Activated CD4-positive, alpha-beta T cell treated with anti-CD3 and anti-CD28 coated beads for 36 hours (primary cell): ENCODE measurements at regions of chr19 and their contacts with region 1.

Region 1: GRCh38 chr19:55117636-55118391 is at the start of gene PPP1R12C:
- DNase-seq: peak; percentile 99
- ATAC-seq: peak; percentile 96
- H3K4me3 Mint-ChIP-seq: peak within 1 kb of the TSS; percentile 95
- H3K27ac Mint-ChIP-seq: peak within 1 kb of the TSS; percentile 97
- H3K4me1 Mint-ChIP-seq: peaks cover 24% of the 10 kb centered on the region
- H3K27me3 Mint-ChIP-seq: peaks cover 2% of the 10 kb centered on the region
- total RNA-seq, gene PPP1R12C: 66.1 to 69.8 TPM

Region 2: DNA sequence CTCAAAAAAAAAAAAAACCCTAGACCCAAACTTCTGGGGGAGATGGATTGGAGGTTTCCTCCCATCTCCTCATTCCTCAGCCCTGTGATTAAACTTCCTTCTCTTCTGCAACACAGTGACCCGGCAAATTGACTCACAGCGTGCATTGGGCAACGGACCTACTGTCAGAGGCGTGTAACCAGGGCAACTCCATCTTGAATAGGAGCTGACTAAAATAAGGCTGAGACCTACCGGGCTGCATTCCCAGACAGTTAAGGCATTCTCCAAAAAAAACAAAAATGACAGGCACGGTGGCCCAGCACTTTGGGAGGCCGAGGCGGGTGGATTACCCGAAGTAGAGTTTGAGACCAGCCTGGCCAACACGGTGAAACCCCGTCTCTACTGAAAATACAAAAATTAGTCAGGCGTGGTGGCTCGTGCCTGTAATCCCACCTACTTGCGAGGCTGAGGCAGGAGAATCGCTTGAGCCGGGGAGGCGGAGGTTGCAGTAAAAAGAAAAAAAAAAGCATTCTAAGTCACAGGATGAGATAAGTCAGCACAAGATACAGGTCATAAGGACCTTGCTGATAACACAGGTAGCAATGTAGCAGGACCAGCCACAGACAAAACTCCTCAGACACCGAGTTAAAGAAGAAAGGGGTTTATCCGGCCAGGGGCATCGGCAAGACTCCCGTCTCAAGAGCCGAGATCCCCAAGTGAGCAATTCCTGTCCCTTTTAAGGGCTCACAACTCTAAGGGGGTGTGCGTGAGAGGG is 165.0 kb before region 1 on chr19:
- CTCF ChIA-PET with region 1: no interaction called
- POLR2A ChIA-PET with region 1: no interaction called
- intact Hi-C with region 1: no loop called
- DNase-seq: no peak
- ATAC-seq: no peak
- H3K4me3 Mint-ChIP-seq: no peak overlapping the region
- H3K27ac Mint-ChIP-seq: no peak overlapping the region
- H3K4me1 Mint-ChIP-seq: no peaks in the 10 kb centered on the region
- H3K27me3 Mint-ChIP-seq: peaks cover 2% of the 10 kb centered on the region

Region 3: DNA sequence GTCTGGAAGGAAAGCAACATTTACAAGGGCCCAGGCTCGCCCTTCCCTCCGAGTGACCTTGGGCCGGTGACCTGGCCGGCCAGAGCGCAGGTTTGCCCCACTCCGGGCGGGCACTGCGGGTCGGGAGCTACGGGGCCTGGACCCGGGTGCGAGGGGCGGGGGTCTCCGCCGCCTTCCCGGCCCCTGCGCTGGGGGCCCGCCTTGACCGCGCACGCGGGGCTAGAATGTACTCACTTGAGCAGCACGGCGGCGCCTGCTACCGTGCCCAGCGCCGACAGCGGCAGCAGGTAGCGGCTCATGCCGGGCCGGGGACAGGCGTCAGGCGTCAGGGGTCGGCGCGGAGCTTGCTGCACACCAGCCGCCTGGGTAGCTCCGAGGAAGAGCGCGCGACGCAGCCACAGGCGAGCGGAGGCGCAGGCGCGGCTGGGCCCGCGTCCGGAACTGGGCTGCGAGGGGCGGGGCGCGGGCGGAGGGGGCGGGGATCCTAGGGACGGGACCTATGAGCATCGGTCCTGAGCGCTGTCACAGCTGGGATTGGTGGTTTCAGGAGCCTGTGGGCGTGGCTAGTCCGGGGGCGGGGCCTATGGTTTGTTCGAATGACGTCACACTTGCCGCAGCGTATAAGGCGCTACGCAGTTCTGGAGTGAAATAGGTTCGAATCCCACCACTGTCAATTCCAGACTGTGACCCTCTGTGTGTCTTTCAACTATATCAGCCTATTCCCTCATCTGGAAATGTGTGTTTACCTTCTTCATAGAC is 54.9 kb before region 1 on chr19 and contains the start of gene RDH13:
- CTCF ChIA-PET with region 1: no interaction called
- POLR2A ChIA-PET with region 1: no interaction called
- intact Hi-C with region 1: loop called in 1 of 2 experiments (anchors 1 kb)
- DNase-seq: peak; percentile 100
- ATAC-seq: peak; percentile 100
- H3K4me3 Mint-ChIP-seq: peak within 1 kb of the TSS; percentile 79
- H3K27ac Mint-ChIP-seq: peak within 1 kb of the TSS; percentile 61
- H3K4me1 Mint-ChIP-seq: peaks cover 9% of the 10 kb centered on the region
- H3K27me3 Mint-ChIP-seq: peaks cover 23% of the 10 kb centered on the region
- total RNA-seq, gene RDH13: 11.9 to 12.8 TPM

Region 4: DNA sequence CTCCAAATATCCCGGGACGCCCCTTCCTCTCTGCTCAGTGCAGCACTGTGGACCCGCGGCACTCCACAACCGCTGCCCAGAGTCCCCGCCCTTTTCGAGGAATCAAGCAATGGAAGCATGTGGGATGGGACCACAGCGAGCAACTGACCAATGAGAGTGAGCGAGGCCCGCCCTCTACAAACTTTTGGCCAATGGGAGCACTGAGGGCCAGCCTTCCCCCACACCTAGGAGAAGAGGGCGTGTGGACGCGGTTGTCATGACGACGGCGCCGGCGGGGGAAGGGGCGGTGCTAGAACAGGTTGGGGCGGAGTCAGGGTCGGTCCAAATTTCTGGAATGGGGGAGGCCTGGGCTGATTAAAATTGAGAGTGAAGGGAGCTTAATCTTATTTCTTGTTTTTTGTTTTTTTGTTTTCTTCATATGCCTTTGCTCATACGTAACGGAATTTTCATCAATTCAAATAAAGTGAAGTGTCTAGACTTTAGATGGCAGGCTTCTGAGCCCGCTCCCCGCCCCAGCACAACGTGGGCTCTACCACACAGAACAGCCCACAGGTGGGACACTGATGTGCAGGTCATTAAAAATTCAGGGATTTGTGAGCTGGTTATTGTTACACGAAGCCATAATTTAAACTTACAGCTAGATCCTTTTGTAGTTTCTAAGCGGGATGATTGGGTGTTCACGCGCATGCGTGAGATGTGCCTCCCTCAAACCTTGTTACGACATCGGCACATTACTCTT is 48.9 kb after region 1 on chr19 and contains the start of gene DNAAF3:
- CTCF ChIA-PET with region 1: no interaction called
- POLR2A ChIA-PET with region 1: interaction called, 4 read pairs
- intact Hi-C with region 1: loop called in 1 of 2 experiments (anchors 1 kb)
- DNase-seq: peak; percentile 95
- ATAC-seq: peak; percentile 95
- H3K4me3 Mint-ChIP-seq: peak within 1 kb of the TSS; percentile 71
- H3K27ac Mint-ChIP-seq: peak within 1 kb of the TSS; percentile 11
- H3K4me1 Mint-ChIP-seq: peaks cover 10% of the 10 kb centered on the region
- H3K27me3 Mint-ChIP-seq: peaks cover 45% of the 10 kb centered on the region
- total RNA-seq, gene DNAAF3: 0.53 to 0.72 TPM

Region 5: DNA sequence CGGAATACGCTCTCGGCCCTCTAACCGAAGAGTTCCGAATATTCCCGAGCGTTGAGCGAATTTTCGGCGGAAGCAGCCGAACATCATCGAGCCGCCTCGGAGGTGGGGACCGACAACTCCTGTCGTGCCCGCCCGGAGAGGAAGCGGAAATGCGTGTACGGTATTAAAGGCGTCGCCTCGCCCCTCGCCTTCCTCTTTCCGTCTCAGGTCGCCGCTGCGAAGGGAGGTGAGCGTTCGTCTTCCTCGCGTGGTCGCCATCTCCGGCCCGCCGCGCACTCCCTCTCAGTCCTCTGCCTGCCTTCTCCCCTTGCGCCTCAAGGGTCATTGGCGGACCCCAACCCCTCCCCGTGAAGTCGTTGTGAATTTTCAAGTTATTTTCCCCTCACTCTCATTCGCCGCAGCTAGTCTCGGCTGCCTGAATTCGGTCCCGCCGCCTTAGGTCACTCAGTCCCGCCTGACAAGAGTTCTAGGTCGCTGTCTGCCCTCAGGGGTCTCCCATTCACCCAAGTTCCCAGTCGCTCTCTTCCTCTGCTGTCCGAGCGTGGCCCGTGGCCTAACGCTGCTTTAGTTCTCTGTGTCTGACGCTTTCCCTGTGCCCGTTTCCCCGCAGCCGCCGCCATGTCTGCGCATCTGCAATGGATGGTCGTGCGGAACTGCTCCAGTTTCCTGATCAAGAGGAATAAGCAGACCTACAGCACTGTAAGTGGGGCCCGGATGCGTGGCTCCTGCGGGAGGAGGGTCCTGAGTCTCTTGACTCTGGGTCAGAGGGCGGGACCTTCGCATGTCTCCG is 268.1 kb after region 1 on chr19 and contains the start of gene RPL28:
- CTCF ChIA-PET with region 1: no interaction called
- POLR2A ChIA-PET with region 1: no interaction called
- intact Hi-C with region 1: loop called in 1 of 2 experiments (anchors 1 kb)
- DNase-seq: peak; percentile 98
- ATAC-seq: peak; percentile 85
- H3K4me3 Mint-ChIP-seq: peak within 1 kb of the TSS; percentile 89
- H3K27ac Mint-ChIP-seq: peak within 1 kb of the TSS; percentile 98
- H3K4me1 Mint-ChIP-seq: peaks cover 51% of the 10 kb centered on the region
- H3K27me3 Mint-ChIP-seq: no peaks in the 10 kb centered on the region
- total RNA-seq, gene RPL28: 2,751 to 4,078 TPM

Region 6: DNA sequence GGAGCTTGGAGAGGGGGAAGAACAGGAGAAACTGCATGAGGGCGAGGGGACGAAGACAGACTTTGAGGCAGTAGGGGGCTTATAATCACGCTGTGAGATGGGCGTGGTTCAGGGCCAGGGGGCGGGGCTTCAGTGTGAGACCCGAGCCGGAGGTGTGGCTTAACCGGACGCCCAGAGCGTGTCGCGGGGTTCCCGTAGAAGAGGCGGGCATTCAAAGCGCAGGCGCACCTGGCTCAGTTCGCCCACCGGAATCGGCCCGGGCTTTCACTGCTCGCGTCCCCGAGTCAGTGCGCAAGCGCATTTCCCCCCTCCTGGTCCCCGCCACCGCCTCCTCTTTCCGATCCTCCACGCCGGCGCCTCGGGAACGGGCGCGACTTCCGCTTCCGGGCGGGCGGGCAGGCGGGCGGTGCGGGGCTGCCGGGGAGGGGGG is 487.4 kb after region 1 on chr19:
- CTCF ChIA-PET with region 1: no interaction called
- POLR2A ChIA-PET with region 1: no interaction called
- intact Hi-C with region 1: loop called in 1 of 2 experiments (anchors 1 kb)
- DNase-seq: peak; percentile 100
- ATAC-seq: peak; percentile 87
- H3K4me3 Mint-ChIP-seq: peak overlapping the region; percentile 88
- H3K27ac Mint-ChIP-seq: peak overlapping the region; percentile 96
- H3K4me1 Mint-ChIP-seq: peaks cover 57% of the 10 kb centered on the region
- H3K27me3 Mint-ChIP-seq: no peaks in the 10 kb centered on the region

Region 7: DNA sequence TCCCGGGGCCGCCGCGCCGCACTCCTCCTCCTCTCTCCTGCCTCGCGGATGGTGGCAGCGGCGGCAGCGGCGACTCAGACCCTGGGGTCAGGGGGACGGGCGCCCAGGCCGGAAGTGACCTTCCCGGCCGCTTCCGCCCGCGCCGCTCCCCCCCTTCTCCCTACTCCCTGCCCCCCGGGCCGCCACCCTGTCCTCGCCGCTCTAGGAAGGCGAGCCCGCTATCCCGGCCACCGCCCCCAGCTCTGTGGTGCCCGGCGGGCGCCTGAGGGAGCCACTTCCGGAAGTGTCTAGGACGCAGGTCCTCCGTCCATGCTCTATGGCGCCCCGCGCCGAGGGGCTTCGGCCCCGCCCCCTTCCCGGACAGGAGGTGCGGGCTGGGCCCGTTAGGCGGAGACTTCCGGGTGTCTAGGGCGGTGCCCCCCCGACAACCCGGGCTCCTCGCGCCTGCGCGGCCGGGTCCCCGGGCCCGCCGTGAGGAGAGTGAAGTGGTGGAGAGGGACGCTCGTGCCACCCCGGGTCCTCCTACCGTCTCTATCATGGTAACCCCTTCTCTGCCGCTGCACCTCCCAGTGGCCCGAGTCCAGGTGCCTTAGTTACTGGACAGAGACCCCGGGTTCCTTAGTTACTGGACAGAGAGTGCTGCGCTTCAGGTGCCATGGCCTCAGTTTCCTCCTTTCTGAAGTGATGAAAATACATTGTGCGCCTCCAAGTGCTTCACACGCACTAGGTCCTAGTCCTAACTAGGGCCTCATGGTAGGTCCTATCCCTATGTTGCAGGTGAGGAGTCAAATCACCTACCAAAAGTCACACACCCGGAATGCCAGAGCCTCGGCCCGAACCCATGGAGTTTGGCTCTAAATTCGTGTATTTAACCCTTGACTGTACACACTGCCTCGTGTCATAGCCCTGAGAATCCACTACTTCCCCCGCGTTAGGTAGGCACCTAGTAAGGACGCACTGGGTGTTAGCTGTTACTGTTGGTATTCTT is 1003.7 kb after region 1 on chr19 and contains the start of gene ZNF787:
- CTCF ChIA-PET with region 1: no interaction called
- POLR2A ChIA-PET with region 1: no interaction called
- intact Hi-C with region 1: loop called in 1 of 2 experiments (anchors 10 kb)
- DNase-seq: peak; percentile 98
- ATAC-seq: peak; percentile 92
- H3K4me3 Mint-ChIP-seq: peak within 1 kb of the TSS; percentile 82
- H3K27ac Mint-ChIP-seq: peak within 1 kb of the TSS; percentile 91
- H3K4me1 Mint-ChIP-seq: peaks cover 48% of the 10 kb centered on the region
- H3K27me3 Mint-ChIP-seq: no peaks in the 10 kb centered on the region
- total RNA-seq, gene ZNF787: 27.6 to 28.4 TPM